ENCODE measurements at regions of chr6 and their contacts with region 1.

Region 1: DNA sequence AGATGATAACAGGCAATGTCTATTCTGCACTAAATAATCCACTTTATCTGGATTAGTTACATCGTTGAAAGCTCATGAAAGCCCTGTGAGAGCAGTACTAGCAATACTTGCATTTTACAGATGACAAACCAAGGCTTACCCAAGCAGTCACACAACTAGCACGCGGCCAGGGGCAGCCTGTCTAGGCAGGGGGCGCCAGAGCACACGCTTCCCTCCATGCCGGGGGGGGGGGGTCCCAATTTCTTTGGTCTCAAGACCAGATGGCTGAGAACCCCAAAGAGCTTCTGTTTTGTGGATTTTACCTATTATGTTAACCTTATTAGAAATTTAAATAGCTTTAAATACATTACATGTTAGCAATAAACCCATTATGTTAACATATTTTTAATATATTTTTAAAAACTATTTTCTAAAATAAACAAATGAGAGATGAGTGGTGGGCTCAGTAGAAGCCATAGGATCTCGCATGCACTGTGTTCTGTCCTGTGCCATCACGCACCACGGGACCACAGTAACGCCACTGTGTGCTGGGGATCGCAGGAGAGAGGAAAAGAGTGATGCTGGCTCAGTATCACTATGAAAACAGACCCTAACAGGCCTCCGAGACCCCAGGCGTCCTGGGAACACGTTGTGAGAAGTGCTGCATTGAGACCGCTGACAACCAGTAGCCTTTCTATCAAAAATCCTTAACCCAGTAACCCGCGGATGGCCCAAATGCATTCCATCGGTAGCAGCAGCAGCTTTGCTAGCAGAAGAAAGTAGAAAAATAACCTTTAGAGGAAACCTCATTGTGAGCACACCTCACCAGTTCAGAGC is 5.3 kb upstream of the PRR18 start:
- DNase-seq: no peak
- H3K4me3 ChIP-seq: no peak overlapping the region
- H3K27me3 ChIP-seq: peaks cover 9% of the 10 kb centered on the region
- CTCF ChIP-seq: peak; percentile 84

Region 2: GRCh38 chr6:166382933-166383801 is 69.7 kb after region 1 on chr6 and contains the start of gene MPC1:
- CTCF ChIA-PET with region 1: interaction called, 11 read pairs
- POLR2A ChIA-PET with region 1: interaction called, 3 read pairs
- DNase-seq: peak; percentile 71
- H3K4me3 ChIP-seq: peak within 1 kb of the TSS; percentile 84
- H3K27me3 ChIP-seq: no peaks in the 10 kb centered on the region; the same call in 1 of the 2 replicates
- CTCF ChIP-seq: no peak
- polyA plus RNA-seq, gene MPC1: 19.2 and 27.5 TPM in 2 replicates